ENCODE measurements at regions of chr10 and their contacts with region 1.

Region 1: GRCh38 chr10:48656241-48656913 is 28.3 kb upstream of the WDFY4 start:
- DNase-seq: peak; percentile 92
- CTCF ChIP-seq: peak; percentile 100

Region 2: DNA sequence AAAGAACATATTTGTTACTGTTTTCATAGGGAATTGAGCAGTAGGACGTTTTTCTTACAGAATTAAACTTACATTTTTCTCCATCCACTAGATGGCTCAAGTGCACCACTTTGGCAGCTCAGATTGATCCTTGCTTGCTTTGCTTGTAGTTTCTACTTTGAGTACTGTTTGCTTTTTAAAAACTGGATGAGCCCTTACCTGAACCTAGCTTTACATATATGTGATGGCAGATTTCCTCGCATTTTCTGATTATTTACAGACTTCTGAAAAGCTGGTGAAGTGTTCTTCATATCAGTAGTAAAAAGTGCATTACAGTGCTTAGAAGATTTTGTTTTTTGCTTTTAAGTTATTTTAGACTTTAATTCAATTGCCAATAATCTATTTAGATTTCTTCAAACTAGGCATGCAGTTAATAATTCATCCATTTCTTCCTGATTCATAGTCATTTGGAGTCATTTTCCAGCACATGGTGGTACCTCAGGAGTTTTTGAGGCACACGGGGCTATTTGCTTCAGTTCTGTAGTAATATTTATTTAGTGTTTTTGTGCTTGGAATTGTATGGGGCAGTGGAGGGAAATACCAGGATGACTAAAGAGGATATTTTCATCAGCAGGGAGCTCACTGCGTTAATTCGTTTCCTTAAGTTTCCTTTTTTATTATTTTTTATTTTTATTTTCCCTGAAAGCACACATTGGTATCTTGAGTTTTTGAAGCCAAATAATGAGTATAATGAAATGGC is 292.6 kb before region 1 on chr10:
- CTCF ChIA-PET with region 1: interaction called, 74 read pairs
- POLR2A ChIA-PET with region 1: no interaction called
- DNase-seq: peak; percentile 25
- CTCF ChIP-seq: peak; percentile 54

Region 3: DNA sequence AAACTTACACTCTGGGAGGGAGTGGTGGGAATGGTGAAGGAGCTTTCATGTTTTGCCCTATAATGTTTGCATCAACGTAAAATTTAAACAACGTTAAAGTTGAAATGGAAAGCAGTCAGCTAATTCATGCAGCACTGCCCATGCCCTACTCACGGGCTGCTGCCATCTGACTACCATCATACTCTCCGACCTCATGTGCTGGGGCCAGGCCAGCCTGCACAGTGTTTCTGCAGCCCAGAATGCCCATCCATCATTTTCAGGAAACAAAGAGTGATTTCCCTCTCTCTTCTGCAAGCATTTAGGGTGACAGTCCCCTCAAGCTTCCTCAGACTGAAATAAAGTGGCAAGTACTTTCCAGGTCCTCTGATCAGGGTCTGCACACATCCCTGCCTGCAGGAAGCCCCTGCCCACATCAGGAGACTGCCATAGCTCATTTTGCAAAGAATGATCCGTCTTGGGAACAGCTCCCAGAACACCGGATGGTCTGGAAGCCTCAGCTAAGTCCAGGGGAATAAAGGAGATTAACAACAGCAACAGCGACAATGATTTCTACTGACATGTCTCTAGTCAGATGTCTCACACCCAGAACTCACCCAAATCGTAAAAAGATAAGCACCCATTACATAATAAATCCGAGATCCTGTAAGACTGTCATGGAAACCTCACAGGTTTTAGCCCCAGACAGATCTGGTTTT is 91.8 kb before region 1 on chr10:
- CTCF ChIA-PET with region 1: interaction called, 336 read pairs
- POLR2A ChIA-PET with region 1: no interaction called
- DNase-seq: no peak
- CTCF ChIP-seq: no peak

Region 4: DNA sequence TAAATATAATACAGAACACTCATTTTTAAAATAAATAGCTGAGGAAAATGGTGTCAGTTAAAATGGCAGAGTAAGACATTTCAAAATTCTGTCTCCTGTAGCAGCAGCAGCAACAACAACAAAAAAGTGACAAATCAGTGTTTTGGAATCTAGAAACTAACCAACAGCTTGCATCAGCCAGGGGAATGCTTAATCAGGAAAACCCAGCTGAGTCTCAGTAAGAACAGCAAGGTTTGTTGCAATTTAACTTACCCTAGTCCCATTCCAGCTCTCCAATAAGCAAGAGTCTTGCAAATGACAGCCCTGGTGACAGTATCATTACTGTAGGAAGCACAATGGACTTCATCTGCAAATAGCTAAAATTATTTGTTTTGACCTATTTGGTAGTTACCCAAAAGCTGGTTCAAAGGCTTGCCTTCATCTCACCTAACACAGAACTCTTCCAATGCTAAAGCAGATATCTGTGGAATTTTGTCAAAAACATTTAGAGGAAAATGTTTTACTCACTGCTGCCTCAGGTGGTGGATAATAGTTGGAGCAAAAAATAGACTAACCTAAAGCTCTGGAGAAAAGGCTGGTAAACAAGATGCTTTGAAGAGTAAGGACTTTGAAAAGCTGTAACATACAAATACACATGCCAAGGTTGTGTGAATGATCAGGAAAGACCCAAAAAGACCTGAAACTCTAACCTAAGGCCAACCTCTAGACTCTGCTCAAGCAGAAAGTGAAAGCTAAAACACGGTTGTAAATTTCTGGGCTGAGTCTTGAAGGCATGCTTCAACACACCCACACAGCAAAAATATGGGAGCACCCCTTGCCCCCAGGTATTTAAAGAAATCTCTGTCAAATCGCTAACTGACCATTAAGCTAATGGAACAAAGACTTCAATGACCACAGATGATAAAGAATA is 41.6 kb before region 1 on chr10:
- CTCF ChIA-PET with region 1: interaction called, 109 read pairs
- POLR2A ChIA-PET with region 1: no interaction called
- DNase-seq: no peak
- CTCF ChIP-seq: no peak

Region 5: GRCh38 chr10:48701139-48701901 is 44.9 kb after region 1 on chr10:
- CTCF ChIA-PET with region 1: interaction called, 394 read pairs
- POLR2A ChIA-PET with region 1: no interaction called
- DNase-seq: no peak
- CTCF ChIP-seq: peak; percentile 48

Region 6: DNA sequence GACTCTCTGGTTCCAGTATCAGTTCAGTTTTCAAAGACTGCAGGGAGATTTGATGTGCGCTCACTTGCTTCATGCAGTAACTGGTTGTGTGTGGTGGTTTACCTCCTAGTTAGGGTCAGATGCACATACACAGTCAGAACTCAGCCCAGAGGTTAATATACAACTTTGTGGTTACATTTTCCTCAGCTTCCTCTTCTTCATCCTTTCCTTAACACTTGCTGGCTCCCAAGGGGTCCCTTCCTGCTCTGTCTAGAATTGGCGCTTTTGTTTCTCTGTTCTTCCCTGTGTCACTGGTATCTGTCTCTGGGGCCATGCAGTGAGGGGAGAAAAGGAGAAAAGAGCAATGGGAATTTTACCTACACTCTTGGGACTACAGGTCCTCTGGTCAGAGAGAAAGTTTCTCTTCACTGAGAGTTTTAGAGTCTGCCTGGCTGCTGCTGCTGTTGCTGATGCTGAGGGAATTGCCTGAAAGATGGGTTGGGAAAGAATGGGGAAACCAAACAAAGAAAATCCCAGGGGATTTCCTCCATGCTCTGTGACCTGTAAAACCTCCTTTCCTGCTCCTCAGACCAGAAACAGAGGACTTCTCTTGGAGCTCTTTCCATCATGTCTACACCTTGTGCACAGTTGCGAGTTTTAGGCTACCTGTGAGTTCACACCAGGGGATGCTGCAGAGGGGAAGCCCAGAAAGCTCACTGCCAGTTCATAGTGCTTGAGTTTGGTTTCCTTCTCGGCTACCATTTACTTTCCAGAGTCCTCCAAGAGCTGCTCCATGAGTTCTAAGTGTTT is 102.9 kb after region 1 on chr10:
- CTCF ChIA-PET with region 1: interaction called, 55 read pairs
- POLR2A ChIA-PET with region 1: no interaction called
- DNase-seq: no peak
- CTCF ChIP-seq: no peak

Region 7: DNA sequence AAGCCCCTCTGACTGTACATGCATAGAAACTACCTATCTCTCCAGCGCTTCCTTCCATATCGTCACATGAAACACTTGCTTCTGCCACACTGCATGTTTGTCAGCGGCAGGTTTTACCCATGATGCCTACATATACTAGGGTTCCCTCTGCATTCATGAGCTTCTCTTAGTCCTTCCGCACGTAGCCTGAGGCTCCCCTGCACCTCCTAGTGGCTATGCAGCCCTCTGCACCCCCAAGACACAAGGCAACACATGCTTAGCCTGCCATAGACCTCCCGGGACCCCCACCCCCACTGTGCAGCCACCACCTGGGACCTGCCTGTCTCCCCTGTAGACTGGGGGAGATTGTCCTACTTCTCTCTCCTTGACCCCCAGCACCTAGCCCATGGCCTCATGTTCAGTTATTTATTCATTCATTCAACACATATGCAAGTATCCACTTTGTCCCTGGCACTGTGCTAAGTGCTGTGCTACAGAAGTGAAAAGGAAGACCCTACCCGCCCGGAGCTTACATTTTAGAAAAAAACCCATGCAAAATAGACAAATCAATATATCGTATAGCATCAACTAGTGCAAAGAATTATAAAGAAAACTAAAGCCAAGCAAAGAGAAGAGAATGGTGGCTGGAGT is 508.3 kb after region 1 on chr10:
- CTCF ChIA-PET with region 1: interaction called, 24 read pairs
- POLR2A ChIA-PET with region 1: no interaction called
- DNase-seq: peak; percentile 58
- CTCF ChIP-seq: peak; percentile 65